ENCODE measurements at regions of chr22 and their contacts with region 1.

Region 1: DNA sequence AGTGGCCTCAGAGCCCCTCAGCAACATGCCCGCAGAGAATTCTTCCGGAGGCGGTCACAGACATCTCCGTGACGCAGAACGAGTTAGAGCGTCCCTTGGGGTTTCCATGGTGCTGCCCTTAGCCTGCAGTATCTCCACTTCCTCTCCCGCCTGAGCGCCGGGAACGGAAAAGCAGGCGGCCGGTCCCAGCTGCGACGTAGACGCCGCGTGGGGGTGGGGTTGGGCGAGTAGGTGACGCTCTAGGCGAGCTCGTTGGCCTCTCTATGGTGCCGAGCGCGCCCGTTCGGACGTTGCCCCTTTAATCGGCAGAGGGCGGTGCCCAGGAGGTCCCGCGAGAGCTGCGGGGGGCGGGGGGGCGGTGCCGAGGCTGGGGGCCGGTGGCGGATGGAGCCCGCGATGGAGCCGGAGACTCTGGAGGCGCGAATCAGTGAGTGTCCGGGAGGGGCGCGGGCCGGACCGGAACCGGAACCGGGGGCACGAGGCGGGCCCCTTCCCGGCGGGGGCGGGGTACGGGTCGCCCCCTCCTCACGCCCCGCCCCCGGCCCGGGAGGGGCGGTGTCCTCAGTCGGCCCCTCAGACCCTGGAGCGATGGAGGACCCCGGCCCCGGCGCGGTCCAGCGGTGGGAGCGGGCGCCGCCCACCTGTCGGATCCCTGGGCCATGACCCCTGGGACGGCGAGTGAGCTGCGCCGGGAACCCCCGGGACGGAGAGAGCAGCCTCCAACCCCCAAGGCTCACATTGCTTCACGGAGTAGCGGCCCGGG is at the start of gene GGA1:
- DNase-seq: peak; percentile 83
- H3K4me3 ChIP-seq: peak within 1 kb of the TSS; percentile 86
- CTCF ChIP-seq: no peak

Region 2: DNA sequence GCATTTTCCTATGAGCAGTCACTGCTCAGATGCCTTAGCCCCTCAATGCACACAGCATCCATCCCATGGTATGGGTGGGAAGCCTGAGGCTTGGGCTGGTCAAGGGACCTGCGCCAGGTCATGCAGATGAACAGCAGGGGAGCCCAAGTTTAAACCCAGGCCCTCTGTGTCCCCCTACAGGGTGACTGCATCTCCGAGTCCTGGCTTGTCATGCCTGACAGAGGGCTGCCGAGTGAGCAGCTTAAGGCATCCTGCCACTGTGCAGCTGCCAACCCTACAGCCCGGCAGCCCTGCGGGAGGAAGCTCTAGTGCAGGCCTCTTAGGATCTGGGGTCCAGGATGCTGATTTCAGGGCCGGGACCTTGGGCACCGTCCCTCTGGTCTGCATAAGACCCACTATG is 468.9 kb before region 1 on chr22:
- CTCF ChIA-PET with region 1: no interaction called
- POLR2A ChIA-PET with region 1: no interaction called
- DNase-seq: no peak
- H3K4me3 ChIP-seq: no peak overlapping the region
- CTCF ChIP-seq: no peak

Region 3: GRCh38 chr22:37538590-37539357 is 69.9 kb before region 1 on chr22:
- CTCF ChIA-PET with region 1: interaction called, 297 read pairs
- POLR2A ChIA-PET with region 1: no interaction called
- DNase-seq: peak; percentile 47
- H3K4me3 ChIP-seq: no peak overlapping the region
- CTCF ChIP-seq: peak; percentile 98

Region 4: GRCh38 chr22:37566903-37567820 is 41.5 kb before region 1 on chr22:
- CTCF ChIA-PET with region 1: interaction called, 86 read pairs
- POLR2A ChIA-PET with region 1: no interaction called
- DNase-seq: no peak
- H3K4me3 ChIP-seq: no peak overlapping the region
- CTCF ChIP-seq: peak; percentile 83

Region 5: GRCh38 chr22:37623075-37624016 is 14.7 kb after region 1 on chr22:
- CTCF ChIA-PET with region 1: interaction called, 29 read pairs
- POLR2A ChIA-PET with region 1: no interaction called
- DNase-seq: no peak
- H3K4me3 ChIP-seq: no peak overlapping the region
- CTCF ChIP-seq: peak; percentile 88

Region 6: DNA sequence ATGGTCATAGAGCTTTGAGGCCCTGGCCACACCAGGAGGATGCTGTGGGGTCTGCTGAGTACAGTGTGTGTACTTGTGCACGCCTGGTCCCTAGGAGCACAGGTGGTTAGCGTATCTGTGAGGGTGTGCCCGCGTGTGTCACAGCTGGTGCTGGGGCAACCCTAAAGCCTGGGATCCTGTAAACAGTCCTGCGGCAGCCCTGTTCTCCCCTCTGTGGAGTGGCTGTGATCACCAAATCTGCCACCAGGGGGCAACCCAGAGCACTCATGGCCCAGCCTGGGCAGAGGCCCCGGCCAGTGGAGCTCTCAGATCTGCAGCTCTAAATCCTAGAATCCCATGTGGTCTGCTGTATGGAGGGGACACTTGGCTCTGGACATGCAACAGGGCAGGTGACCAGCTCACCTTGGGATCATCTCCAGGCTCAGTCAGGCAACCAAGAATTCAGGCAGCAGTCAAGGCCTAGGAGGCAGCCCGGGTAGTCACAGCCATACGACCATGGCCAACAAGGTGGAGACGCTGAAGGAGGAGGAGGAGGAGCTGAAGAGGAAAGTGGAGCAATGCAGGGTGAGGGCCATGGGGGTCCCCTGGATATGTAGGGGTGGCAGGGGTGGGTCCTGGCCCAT is 34.7 kb after region 1 on chr22:
- CTCF ChIA-PET with region 1: interaction called, 454 read pairs
- POLR2A ChIA-PET with region 1: no interaction called
- DNase-seq: no peak
- H3K4me3 ChIP-seq: no peak overlapping the region
- CTCF ChIP-seq: peak; percentile 89

Region 7: DNA sequence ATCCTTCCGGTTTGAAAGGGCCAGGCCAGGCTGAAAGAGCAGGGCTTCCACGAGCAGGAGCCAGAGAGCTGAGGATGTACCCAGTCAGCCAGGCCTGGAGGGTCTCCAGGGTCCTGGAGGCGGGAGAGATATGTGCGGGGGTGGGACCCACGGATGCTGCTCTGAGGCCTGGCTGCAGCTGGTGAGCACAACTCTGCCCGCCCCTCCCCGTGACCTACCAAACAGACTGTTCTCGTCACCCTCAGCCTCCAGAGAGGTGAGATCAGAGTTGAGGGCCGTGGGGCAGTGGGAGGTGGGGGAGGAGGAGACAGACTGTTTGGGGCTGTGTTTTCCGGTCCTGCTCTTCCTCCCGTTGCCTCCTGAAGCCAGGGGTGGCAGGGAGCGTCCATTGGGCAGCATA is 130.4 kb after region 1 on chr22:
- CTCF ChIA-PET with region 1: interaction called, 10 read pairs
- POLR2A ChIA-PET with region 1: no interaction called
- DNase-seq: no peak
- H3K4me3 ChIP-seq: no peak overlapping the region
- CTCF ChIP-seq: no peak

Measured in AG04449 (cell line).